ENCODE measurements at regions of chr6 and their contacts with region 1.

Region 1: GRCh38 chr6:33607784-33608161 is 13.3 kb upstream of the ITPR3 start:
- DNase-seq: no peak
- H3K4me3 ChIP-seq: no peak overlapping the region
- H3K27me3 ChIP-seq: no peaks in the 10 kb centered on the region
- CTCF ChIP-seq: 0 out of 2 replicates have a peak, but pooled peaks have one; percentile 9

Region 2: GRCh38 chr6:33620856-33621710 is 13.3 kb after region 1 on chr6 and contains the start of gene ITPR3:
- CTCF ChIA-PET with region 1: interaction called, 14 read pairs
- POLR2A ChIA-PET with region 1: no interaction called
- DNase-seq: no peak
- H3K4me3 ChIP-seq: peak within 1 kb of the TSS; percentile 62
- H3K27me3 ChIP-seq: no peaks in the 10 kb centered on the region
- CTCF ChIP-seq: no peak
- polyA plus RNA-seq, gene ITPR3: 8.6 and 16.6 TPM in 2 replicates

Region 3: DNA sequence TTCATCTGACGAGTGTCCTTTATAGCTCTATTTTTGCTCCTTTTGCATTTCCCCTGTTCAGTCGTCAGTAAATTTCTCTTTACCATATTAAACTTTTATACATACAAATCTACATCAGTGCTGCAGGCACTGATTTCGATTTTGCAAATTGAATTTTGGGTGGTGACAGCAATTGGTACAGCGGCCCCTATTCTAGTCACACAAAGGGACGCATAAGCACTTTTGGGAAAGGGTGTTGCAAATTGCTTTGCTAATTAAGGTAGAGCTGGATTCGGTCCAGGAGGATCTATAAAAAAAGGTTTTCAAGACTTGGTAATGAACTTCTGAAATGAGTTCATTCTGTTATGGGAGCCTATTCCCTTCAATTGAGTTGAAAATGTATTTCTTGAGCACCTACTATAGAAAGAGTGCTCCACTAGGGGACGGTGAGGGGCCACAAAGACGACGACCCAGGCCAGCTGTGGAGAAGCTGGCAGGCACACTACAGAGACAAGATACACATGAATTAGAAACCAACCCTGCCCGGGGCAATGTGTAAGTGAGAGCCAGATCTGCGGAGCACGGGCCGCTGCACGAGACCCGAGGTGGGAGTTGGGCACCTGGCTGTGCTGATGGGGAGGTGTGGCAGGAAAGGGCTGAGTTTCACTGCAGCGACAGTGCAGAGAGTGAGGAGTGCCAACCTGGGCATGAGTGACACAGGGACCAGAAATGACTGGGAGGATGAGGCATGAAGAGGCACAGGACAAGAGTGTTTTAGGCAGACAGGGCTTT is 98.4 kb after region 1 on chr6:
- CTCF ChIA-PET with region 1: interaction called, 9 read pairs
- POLR2A ChIA-PET with region 1: interaction called, 10 read pairs
- DNase-seq: no peak
- H3K4me3 ChIP-seq: no peak overlapping the region
- H3K27me3 ChIP-seq: no peaks in the 10 kb centered on the region
- CTCF ChIP-seq: no peak

Region 4: DNA sequence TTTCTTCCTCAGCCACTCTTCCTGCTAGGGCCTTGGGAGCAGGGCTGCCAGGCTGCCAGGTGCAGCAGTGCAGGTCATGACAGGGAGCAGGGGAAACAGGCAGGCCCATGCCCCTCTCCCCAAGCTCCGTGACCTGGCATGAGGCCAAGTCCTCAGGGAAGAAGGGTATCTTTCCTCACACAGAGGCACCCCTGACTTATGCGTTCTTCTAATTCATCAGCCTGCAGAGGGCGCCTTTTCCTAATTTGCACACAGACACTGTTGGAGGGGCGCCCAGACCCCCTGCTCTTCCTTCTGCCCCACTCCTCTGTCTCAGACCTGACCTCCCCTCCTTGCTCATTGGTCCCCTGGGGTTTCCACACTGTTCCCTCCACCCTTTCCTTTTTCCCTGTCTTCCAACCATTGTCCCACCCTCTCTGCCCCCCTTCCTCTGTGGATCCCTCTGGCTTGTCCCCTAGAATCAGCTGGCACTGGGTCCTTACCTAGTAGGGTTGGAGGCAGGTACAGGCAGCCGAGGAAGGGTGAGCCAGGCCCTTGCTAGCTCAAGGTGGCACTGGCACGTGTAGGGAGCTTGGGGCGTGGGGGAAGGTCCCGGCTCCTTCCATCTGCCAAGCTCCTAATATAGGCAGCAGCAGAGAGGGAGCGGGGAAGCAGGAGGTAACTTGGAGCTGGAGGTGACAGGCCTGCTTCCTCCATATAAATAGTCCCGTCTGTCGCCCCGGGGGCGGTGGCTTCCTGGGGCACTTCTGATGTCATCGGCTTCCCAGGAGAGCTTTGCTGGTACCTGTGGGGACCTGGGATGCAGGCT is 351.0 kb after region 1 on chr6:
- CTCF ChIA-PET with region 1: no interaction called
- POLR2A ChIA-PET with region 1: no interaction called
- DNase-seq: no peak
- H3K4me3 ChIP-seq: no peak overlapping the region
- H3K27me3 ChIP-seq: peaks cover 2% of the 10 kb centered on the region; the same call in 1 of the 2 replicates
- CTCF ChIP-seq: peak; percentile 19